IMR-90 (cell line): ENCODE measurements at regions of chr10 and their contacts with region 1.

Region 1: GRCh38 chr10:88553116-88553752 is 29.9 kb downstream of the RNLS start:
- DNase-seq: peak; percentile 84
- ATAC-seq: peak; percentile 96
- H3K4me3 ChIP-seq: no peak overlapping the region
- H3K27ac ChIP-seq: no peak overlapping the region
- H3K4me1 ChIP-seq: no peaks in the 10 kb centered on the region; the same call in 1 of the 2 replicates
- H3K27me3 ChIP-seq: no peaks in the 10 kb centered on the region
- CTCF ChIP-seq: peak; percentile 79
- POLR2A ChIP-seq: no peak
- RAD21 ChIP-seq: peak; percentile 88

Region 2: DNA sequence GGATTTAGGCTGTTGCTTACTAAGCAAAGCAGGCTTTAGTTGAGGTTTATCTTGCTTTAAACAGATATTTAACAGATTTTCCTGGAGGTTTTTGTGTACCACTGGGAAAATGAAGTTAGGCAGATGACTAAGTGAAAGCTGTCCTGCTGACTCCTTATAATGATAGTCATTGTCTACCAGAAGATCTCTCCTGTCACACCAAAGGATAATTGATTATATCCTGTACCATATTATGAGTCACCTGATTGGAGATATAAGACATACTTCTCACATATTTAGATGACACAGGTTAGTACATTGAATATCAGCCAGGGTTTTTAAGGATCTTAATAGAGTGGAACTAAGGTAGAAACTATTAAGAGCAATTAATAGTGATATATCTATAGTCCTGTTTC is 621.4 kb before region 1 on chr10:
- CTCF ChIA-PET with region 1: no interaction called
- POLR2A ChIA-PET with region 1: no interaction called
- dilution Hi-C with region 1: no loop called
- in situ Hi-C with region 1: no loop called
- intact Hi-C with region 1: loop called (anchors 10 kb)
- DNase-seq: peak; percentile 60
- ATAC-seq: 0 out of 2 replicates have a peak, but pooled peaks have one; percentile 9
- H3K4me3 ChIP-seq: no peak overlapping the region
- H3K27ac ChIP-seq: no peak overlapping the region
- H3K4me1 ChIP-seq: peaks cover 3% of the 10 kb centered on the region; the same call in 1 of the 2 replicates
- H3K27me3 ChIP-seq: no peaks in the 10 kb centered on the region
- CTCF ChIP-seq: no peak
- POLR2A ChIP-seq: no peak
- RAD21 ChIP-seq: no peak

Region 3: DNA sequence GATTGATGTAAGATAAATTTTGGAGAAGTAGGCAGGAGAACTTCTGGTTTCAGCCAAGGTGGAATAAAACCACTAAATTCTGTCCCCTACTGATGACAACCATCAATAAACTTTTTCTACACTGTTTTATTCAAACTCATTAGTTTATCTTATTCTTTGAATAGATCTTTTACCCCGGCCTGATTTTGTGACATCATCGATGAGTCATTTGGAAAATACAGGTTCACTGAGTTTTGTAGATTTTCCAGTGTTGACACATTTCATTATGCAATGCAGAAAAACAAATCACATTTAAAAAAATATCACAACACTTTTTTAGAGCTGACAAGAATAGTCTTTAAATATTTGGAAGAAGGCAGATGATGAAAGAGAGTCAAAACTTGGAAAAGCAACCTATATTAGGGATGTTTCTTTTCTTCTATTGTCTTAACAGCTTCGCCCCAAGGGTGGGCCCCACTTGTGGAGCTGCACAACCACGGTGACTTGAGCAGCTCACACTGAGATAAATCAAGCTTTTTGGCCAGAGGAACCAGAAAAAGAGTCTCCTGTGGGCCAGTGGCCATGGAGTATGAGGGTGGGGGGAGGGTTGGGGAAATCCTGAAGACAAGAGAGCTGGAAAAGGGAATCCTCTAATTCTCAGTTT is 577.0 kb before region 1 on chr10:
- CTCF ChIA-PET with region 1: no interaction called
- POLR2A ChIA-PET with region 1: no interaction called
- dilution Hi-C with region 1: no loop called
- in situ Hi-C with region 1: no loop called
- intact Hi-C with region 1: loop called (anchors 10 kb)
- DNase-seq: peak; percentile 42
- ATAC-seq: no peak
- H3K4me3 ChIP-seq: no peak overlapping the region
- H3K27ac ChIP-seq: no peak overlapping the region
- H3K4me1 ChIP-seq: peaks cover 3% of the 10 kb centered on the region; the same call in 1 of the 2 replicates
- H3K27me3 ChIP-seq: no peaks in the 10 kb centered on the region; the same call in 1 of the 2 replicates
- CTCF ChIP-seq: no peak
- POLR2A ChIP-seq: no peak
- RAD21 ChIP-seq: no peak

Region 4: GRCh38 chr10:88152720-88153119 is 400.5 kb before region 1 on chr10:
- CTCF ChIA-PET with region 1: no interaction called
- POLR2A ChIA-PET with region 1: no interaction called
- dilution Hi-C with region 1: no loop called
- in situ Hi-C with region 1: no loop called
- intact Hi-C with region 1: loop called (anchors 10 kb)
- DNase-seq: peak; percentile 97
- ATAC-seq: peak; percentile 78
- H3K4me3 ChIP-seq: no peak overlapping the region
- H3K27ac ChIP-seq: peak overlapping the region; percentile 49
- H3K4me1 ChIP-seq: peaks cover 19% of the 10 kb centered on the region
- H3K27me3 ChIP-seq: no peaks in the 10 kb centered on the region
- CTCF ChIP-seq: no peak
- POLR2A ChIP-seq: peak; percentile 35; the same call in 1 of the 2 replicates
- RAD21 ChIP-seq: peak; percentile 12; the same call in 1 of the 2 replicates

Region 5: GRCh38 chr10:88401671-88402347 is 151.4 kb before region 1 on chr10:
- CTCF ChIA-PET with region 1: no interaction called
- POLR2A ChIA-PET with region 1: no interaction called
- dilution Hi-C with region 1: no loop called
- in situ Hi-C with region 1: no loop called
- intact Hi-C with region 1: loop called (anchors 5 kb)
- DNase-seq: peak; percentile 35
- ATAC-seq: peak; percentile 77
- H3K4me3 ChIP-seq: no peak overlapping the region
- H3K27ac ChIP-seq: no peak overlapping the region
- H3K4me1 ChIP-seq: no peaks in the 10 kb centered on the region
- H3K27me3 ChIP-seq: no peaks in the 10 kb centered on the region
- CTCF ChIP-seq: peak; percentile 45
- POLR2A ChIP-seq: no peak
- RAD21 ChIP-seq: peak; percentile 35